SK-N-SH (cell line): ENCODE measurements at regions of chr9 and their contacts with region 1.

Region 1: DNA sequence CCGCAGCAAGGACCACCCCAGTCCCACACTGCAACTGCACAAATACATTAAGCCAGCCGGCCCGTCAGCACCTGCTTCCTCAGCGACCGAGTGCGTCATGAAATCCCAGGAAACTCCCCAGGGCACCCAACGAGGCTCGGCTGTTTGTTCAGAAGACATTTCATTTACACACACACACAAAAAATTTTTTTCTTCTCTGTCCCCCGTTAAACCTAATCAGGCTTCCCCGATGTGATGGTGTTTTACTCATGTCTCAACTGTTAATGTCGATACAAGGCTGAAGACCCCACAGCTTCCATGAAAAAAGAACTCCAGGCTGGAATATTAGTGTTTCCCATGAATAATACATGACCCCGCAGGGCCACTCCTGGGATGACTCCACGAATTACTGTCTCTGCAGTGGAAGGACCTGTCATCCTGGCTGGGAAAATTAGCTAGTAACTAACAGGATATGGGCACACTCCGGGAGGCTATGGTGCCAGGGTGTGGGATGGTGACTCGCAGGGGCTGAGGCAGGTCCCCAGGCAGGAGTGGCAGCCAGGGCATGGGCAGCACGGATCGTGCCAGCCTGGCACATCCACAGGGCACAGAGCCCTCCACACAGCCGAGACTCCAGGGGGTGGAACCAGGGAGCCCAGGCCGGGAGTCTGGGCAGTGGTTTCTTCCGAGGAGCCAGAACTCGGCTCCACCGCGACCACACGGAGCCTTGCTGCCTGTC is 102.4 kb downstream of the VAV2 start:
- DNase-seq: no peak
- H3K4me3 ChIP-seq: no peak overlapping the region
- H3K27ac ChIP-seq: peak overlapping the region; percentile 58 to 85
- H3K4me1 ChIP-seq: peaks cover 13 to 63% of the 10 kb centered on the region in 2 experiments; a peak in 2 of 4 replicates
- H3K27me3 ChIP-seq: no peaks in the 10 kb centered on the region
- CTCF ChIP-seq: no peak
- EP300 ChIP-seq: no peak
- RAD21 ChIP-seq: no peak

Region 2: GRCh38 chr9:132885718-132886333 is 1003.9 kb before region 1 on chr9:
- CTCF ChIA-PET with region 1: no interaction called
- POLR2A ChIA-PET with region 1: no interaction called
- DNase-seq: no peak
- H3K4me3 ChIP-seq: no peak overlapping the region
- H3K27ac ChIP-seq: no peak overlapping the region
- H3K4me1 ChIP-seq: no peaks in the 10 kb centered on the region
- H3K27me3 ChIP-seq: no peaks in the 10 kb centered on the region
- CTCF ChIP-seq: no peak
- EP300 ChIP-seq: no peak
- RAD21 ChIP-seq: no peak

Region 3: GRCh38 chr9:133876144-133876543 is 13.6 kb before region 1 on chr9:
- CTCF ChIA-PET with region 1: interaction called, 18 read pairs
- POLR2A ChIA-PET with region 1: interaction called, 3 read pairs
- DNase-seq: peak; percentile 62
- H3K4me3 ChIP-seq: no peak overlapping the region
- H3K27ac ChIP-seq: peak overlapping the region; percentile 96 to 99
- H3K4me1 ChIP-seq: peaks cover 26 to 98% of the 10 kb centered on the region in 2 experiments
- H3K27me3 ChIP-seq: no peaks in the 10 kb centered on the region
- CTCF ChIP-seq: peak; percentile 37; the same call in 1 of the 2 replicates
- EP300 ChIP-seq: no peak
- RAD21 ChIP-seq: no peak

Region 4: GRCh38 chr9:134040781-134041648 is 151.3 kb after region 1 on chr9:
- CTCF ChIA-PET with region 1: no interaction called
- POLR2A ChIA-PET with region 1: no interaction called
- DNase-seq: peak; percentile 86
- H3K4me3 ChIP-seq: no peak overlapping the region
- H3K27ac ChIP-seq: peak overlapping the region in 1 of 2 experiments; percentile 56; a peak in 1 of 4 replicates
- H3K4me1 ChIP-seq: peaks cover 0 to 18% of the 10 kb centered on the region in 2 experiments; a peak in 1 of 4 replicates
- H3K27me3 ChIP-seq: no peaks in the 10 kb centered on the region
- CTCF ChIP-seq: no peak
- EP300 ChIP-seq: no peak
- RAD21 ChIP-seq: no peak